HEK293 (cell line): ENCODE measurements at regions of chr14 and their contacts with region 1.

Region 1: DNA sequence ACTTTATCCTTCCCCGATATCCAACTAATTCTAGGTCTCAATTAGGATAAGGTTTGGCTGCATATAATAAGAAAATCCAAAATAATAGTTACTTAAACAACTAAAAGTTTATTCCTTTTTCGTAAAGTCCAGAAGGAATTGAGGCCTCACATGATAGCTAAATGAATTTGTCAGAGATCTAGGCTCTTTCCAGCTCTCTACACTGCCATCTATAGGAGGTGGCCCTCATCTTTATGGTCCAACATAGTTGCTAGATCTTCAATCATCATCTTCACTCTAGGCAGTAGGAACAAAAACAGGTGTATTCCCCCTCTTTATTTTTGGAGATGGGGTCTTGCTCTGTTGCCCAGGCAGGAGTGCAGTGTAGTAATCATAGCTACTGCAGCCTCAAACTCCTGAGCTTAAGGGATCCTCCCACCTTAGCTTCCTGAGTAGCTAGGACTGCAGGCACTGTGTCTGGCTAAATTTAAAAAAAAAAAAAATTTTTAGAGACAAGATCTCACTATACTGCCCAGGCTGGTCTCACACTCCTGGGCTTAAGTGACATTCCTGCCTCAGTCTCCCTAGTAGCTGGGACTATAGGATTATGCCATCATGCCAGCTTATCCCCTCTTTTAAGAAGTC is 46.5 kb upstream of the SAV1 start:
- H3K4me3 ChIP-seq: no peak overlapping the region
- H3K27ac ChIP-seq: no peak overlapping the region
- H3K4me1 ChIP-seq: no peaks in the 10 kb centered on the region
- CTCF ChIP-seq: no peak

Region 2: DNA sequence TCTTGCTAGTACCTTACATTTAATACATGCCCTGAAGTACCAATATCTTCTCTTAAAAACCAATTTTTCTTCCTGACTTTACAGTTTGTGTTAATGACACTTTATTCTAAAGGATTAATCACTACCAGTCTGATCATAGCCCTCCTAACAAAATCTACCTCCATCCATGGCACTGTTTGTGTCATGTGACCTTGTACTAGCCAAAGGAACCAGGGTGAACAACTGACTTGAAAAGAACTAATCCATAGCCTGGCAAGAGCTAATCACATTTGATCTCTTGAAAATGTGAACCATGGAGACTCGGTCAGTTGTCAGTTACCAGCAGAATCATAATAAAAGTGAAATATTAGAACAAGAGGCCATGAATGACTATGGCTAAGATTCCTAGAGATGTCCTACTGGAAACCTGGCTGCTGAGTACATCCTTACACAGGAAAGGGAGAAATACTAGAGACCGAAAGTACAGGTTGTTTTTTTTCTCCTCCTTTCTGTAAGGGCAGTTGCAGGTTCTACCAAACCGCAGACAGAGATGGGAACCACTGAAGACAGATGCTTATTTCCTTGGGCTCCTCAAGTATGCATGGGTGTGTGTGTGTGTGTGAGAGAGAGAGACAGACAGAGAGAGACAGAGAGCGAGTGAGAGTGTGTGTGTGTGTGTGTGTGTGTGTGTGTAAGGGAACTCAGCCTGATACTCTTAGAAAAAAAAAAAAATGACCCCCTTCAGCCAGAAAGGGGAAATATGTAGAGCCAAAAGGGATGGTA is 224.9 kb before region 1 on chr14:
- CTCF ChIA-PET with region 1: no interaction called
- POLR2A ChIA-PET with region 1: no interaction called
- H3K4me3 ChIP-seq: no peak overlapping the region
- H3K27ac ChIP-seq: no peak overlapping the region
- H3K4me1 ChIP-seq: no peaks in the 10 kb centered on the region
- CTCF ChIP-seq: no peak

Region 3: GRCh38 chr14:50704454-50705010 is 10.0 kb before region 1 on chr14:
- CTCF ChIA-PET with region 1: interaction called, 10 read pairs
- POLR2A ChIA-PET with region 1: no interaction called
- H3K4me3 ChIP-seq: no peak overlapping the region
- H3K27ac ChIP-seq: no peak overlapping the region
- H3K4me1 ChIP-seq: no peaks in the 10 kb centered on the region
- CTCF ChIP-seq: no peak

Region 4: GRCh38 chr14:50725761-50726160 is 11.2 kb after region 1 on chr14:
- CTCF ChIA-PET with region 1: interaction called, 16 read pairs
- POLR2A ChIA-PET with region 1: no interaction called
- H3K4me3 ChIP-seq: no peak overlapping the region
- H3K27ac ChIP-seq: no peak overlapping the region
- H3K4me1 ChIP-seq: 0 out of 2 replicates have a peak, but pooled peaks cover 2% of the 10 kb centered on the region
- CTCF ChIP-seq: no peak